ENCODE measurements at regions of chr5 and their contacts with region 1.

Region 1: GRCh38 chr5:39187831-39188731 is 31.3 kb downstream of the FYB1 start:
- DNase-seq: peak; percentile 71
- ATAC-seq: peak; percentile 94
- H3K4me3 ChIP-seq: no peak overlapping the region
- H3K27ac ChIP-seq: no peak overlapping the region
- H3K4me1 ChIP-seq: peaks cover 9% of the 10 kb centered on the region
- H3K27me3 ChIP-seq: no peaks in the 10 kb centered on the region
- CTCF ChIP-seq: no peak

Region 2: DNA sequence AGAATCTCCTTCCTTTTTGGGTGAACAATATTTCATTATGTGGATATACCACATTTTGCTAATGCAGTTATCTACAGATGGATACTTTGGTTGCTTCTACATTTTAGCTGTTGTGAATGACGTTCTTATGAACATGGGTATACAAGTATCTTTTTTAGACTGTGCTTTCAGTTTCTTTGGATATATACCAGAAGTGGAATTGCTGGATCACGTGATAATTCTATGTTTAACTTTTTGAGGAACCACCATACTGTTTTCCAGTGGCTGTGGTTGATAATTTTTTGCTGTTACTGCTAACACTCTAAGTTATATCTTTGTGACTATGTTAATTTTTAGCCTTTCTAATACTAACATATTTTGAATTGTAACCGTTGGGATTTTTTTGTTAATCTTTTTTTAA is 1796.5 kb before region 1 on chr5:
- CTCF ChIA-PET with region 1: no interaction called
- POLR2A ChIA-PET with region 1: no interaction called
- intact Hi-C with region 1: no loop called
- DNase-seq: no peak
- ATAC-seq: no peak
- H3K4me3 ChIP-seq: no peak overlapping the region
- H3K27ac ChIP-seq: no peak overlapping the region
- H3K4me1 ChIP-seq: no peaks in the 10 kb centered on the region
- H3K27me3 ChIP-seq: no peaks in the 10 kb centered on the region
- CTCF ChIP-seq: no peak

Region 3: DNA sequence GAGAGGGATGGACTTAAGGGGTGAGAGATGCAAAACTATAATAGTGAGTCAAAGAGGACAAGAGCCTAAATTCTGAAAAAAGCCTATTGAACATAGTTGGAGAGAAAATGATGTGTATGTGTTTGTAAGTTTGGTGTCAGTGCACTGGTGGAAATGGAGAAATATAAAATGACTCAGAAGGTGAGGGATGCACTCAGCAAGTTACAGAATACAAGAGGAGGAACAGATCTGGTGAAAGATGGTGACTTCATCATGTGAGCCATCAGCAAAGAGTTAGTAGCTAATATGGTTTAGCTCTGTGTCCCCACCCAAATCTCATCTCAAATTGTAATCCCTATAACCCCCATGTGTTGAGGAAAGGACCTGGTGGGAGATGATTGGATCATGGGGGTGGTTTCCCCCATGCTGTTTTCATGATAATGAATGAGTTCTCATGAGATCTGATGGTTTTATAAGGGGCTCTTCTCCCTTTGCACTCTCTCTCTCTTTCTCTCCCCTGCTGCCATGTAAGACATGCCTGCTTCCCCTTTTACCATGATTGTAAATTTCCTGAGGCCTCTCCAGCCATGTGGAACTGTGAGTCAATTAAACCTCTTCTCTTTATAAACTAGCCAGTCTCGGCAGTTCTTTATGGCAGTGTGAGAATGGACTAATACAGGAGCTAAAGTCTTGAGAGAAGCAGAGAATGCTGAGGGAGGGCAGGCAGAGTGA is 61.6 kb after region 1 on chr5:
- CTCF ChIA-PET with region 1: no interaction called
- POLR2A ChIA-PET with region 1: interaction called, 10 read pairs
- intact Hi-C with region 1: no loop called
- DNase-seq: no peak
- ATAC-seq: no peak
- H3K4me3 ChIP-seq: no peak overlapping the region
- H3K27ac ChIP-seq: no peak overlapping the region
- H3K4me1 ChIP-seq: peaks cover 9% of the 10 kb centered on the region
- H3K27me3 ChIP-seq: no peaks in the 10 kb centered on the region
- CTCF ChIP-seq: no peak